ENCODE measurements at regions of chr1 and their contacts with region 1.

Region 1: DNA sequence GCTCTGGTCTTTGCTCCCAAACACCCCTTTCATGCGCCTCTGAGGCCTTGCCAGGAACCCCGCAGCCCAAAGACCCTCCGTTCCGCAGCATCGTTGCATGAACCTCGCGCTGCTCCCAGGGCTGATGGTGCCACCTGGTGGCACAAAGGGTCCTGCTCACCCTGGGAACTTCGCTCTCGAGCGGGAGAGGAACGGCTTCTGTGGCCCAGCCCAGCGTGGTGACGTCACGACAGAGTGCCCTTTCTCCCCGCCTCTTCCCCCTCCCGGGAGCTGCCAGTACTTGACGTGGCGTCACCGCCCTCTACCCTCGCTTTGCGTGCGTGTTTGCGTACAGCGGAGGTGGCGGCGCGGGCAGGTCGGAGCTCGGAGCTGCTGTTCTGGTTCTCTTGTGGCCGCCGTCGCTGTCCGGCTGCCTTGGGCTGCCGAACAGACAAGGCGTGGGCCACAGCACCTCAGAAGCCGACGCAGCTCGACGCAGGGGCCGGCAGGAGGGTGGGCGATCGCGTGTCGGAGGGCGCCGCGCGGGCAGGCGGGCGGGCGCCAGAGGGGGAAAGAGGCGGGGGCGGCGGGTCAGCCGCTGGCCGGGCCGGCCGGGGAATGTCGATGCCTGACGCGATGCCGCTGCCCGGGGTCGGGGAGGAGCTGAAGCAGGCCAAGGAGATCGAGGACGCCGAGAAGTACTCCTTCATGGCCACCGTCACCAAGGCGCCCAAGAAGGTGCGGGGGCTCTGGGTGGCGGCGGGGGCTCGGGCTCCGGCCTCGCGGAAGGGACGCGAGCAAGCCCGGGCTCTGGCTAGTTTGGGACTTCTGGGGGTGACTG is at the start of gene AHCYL1:
- DNase-seq: peak; percentile 98
- H3K4me3 ChIP-seq: peak within 1 kb of the TSS; percentile 87
- H3K27ac ChIP-seq: peak within 1 kb of the TSS; percentile 59
- H3K4me1 ChIP-seq: peaks cover 86% of the 10 kb centered on the region
- H3K27me3 ChIP-seq: no peaks in the 10 kb centered on the region
- CTCF ChIP-seq: peak; percentile 99
- total RNA-seq, gene AHCYL1: 143 and 147 TPM in 2 replicates

Region 2: DNA sequence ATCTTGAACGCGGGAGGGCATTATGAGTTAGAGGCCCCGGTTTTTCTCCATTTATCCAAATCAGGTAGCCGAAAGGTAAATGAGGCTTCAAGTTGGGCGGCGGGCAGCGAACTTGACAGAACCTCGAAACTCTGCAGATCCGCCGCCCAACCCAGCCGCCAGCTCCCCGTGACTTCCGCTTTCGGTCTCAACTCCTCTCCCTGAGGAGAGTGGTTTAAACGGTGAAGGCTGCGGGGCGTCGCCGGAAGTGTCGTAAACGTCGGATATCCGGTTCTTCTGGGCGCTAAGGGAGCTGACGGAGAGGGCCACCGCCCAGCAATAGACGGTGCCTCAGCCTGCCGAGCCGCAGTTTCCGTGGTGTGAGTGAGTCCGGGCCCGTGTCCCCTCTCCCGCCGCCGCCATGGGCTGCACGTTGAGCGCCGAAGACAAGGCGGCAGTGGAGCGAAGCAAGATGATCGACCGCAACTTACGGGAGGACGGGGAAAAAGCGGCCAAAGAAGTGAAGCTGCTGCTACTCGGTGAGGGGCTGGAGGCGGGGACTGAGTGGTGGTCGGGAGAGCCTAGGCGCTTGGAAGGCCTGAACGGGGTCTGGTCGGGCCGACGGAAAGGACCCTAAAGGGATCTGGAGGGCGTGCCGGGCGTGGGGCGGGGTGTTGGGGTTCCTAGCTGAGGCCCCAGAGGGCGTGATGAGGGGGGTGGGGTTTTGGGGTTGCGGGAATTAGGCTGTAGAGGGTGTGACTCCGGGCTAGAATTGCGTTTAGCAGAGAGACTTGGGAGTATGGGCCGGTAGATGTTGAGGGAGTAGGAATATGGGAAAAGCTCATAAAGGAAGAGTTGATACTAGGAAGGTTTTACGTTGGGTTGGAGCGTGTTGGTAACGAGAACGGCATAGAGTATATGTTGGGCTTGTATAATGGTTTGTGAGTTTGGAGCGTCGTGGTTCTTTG is 436.1 kb before region 1 on chr1 and contains the start of gene GNAI3:
- CTCF ChIA-PET with region 1: interaction called, 11 read pairs
- POLR2A ChIA-PET with region 1: no interaction called
- intact Hi-C with region 1: loop called (anchors 1 kb)
- DNase-seq: peak; percentile 90 to 97
- H3K4me3 ChIP-seq: peak within 1 kb of the TSS; percentile 93
- H3K27ac ChIP-seq: peak within 1 kb of the TSS; percentile 91
- H3K4me1 ChIP-seq: peaks cover 23% of the 10 kb centered on the region
- H3K27me3 ChIP-seq: no peaks in the 10 kb centered on the region
- CTCF ChIP-seq: peak; percentile 42; the same call in 1 of the 2 replicates
- total RNA-seq, gene GNAI3: 7.6 and 10.0 TPM in 2 replicates

Region 3: DNA sequence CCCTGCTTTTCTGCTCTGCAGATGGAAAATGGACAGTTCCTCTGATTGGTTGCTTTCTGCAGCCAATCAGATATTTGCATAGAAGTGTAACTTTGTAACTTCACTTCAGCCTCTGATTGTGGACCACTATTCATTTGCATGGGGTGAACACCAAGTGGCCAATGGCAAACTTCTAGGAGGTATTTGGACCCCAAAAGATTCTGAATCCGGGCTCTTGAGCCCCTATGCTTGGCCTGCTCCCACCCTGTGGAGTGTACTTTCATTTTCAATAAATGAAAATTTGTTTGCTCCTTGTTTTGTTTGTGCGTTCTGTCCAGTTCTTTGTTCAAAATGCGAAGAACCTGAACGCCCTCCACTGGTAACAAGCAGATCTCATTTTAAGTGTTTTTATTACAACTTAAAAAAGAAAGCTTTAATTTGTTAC is 335.2 kb before region 1 on chr1:
- CTCF ChIA-PET with region 1: interaction called, 13 read pairs
- POLR2A ChIA-PET with region 1: interaction called, 3 read pairs
- intact Hi-C with region 1: no loop called
- DNase-seq: peak in 1 of 2 experiments; percentile 26
- H3K4me3 ChIP-seq: no peak overlapping the region
- H3K27ac ChIP-seq: no peak overlapping the region
- H3K4me1 ChIP-seq: peaks cover 41% of the 10 kb centered on the region
- H3K27me3 ChIP-seq: no peaks in the 10 kb centered on the region
- CTCF ChIP-seq: no peak

Region 4: GRCh38 chr1:109783429-109783831 is 201.2 kb before region 1 on chr1:
- CTCF ChIA-PET with region 1: interaction called, 7 read pairs
- POLR2A ChIA-PET with region 1: interaction called, 10 read pairs
- intact Hi-C with region 1: no loop called
- DNase-seq: peak; percentile 77 to 99
- H3K4me3 ChIP-seq: peak overlapping the region; percentile 12; the same call in 1 of the 2 replicates
- H3K27ac ChIP-seq: peak overlapping the region; percentile 89
- H3K4me1 ChIP-seq: peaks cover 76% of the 10 kb centered on the region
- H3K27me3 ChIP-seq: no peaks in the 10 kb centered on the region
- CTCF ChIP-seq: no peak

Region 5: DNA sequence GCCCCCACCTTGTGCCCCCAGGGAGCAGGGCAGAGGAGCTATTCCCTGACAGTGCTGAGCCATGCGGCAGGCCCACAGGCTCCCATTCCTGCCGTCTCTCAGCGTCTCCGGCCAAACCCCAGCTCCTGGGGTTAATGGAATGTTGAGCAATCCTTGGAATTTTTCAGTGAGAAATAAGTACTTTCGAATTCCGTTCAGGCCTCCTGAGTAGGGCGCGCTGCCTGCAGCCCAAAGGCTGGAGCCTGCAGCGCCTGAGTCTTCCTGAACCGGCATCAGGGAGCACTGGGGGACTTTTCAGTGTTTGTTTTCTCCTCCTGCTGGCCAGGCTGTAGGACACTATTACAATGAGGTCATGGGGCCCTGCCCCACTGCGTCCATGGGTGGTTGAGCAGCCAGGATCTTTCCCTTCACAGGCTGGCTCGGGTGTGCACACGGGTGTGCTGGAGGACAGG is 107.3 kb before region 1 on chr1:
- CTCF ChIA-PET with region 1: no interaction called
- POLR2A ChIA-PET with region 1: no interaction called
- intact Hi-C with region 1: loop called (anchors 1 kb)
- DNase-seq: peak; percentile 82 to 93
- H3K4me3 ChIP-seq: peak overlapping the region; percentile 30; the same call in 1 of the 2 replicates
- H3K27ac ChIP-seq: peak overlapping the region; percentile 82
- H3K4me1 ChIP-seq: peaks cover 44% of the 10 kb centered on the region
- H3K27me3 ChIP-seq: no peaks in the 10 kb centered on the region
- CTCF ChIP-seq: peak; percentile 56; the same call in 1 of the 2 replicates

Region 6: DNA sequence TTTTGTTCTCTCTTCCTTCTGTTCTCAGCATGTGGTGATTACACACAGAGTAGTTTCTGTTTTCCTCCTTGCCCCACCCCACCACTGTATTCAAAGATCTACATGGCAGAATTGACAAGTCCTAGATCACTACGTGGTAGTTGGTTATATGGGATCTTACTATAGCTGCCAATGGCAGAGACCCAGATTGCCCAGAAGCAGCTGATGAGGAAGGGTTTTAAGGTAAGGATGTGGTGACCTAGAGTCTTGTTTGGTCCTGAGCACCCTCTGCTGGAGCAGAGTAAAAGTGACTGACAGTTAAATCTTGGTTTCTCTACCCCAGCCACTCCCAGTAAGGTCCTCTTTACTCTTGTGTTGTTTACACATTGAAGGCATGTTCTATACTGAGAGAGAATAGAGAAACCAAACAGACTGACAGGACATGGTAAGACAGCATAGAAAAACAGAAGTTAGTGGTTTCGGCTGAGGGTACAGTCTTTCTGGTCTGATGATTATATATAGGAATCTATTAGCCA is 26.9 kb after region 1 on chr1:
- CTCF ChIA-PET with region 1: interaction called, 6 read pairs
- POLR2A ChIA-PET with region 1: no interaction called
- intact Hi-C with region 1: loop called (anchors 1 kb)
- DNase-seq: peak; percentile 27 to 59
- H3K4me3 ChIP-seq: no peak overlapping the region
- H3K27ac ChIP-seq: no peak overlapping the region
- H3K4me1 ChIP-seq: peaks cover 11% of the 10 kb centered on the region
- H3K27me3 ChIP-seq: no peaks in the 10 kb centered on the region
- CTCF ChIP-seq: peak; percentile 82